GM10248 (cell line): ENCODE measurements at regions of chr14 and their contacts with region 1.

Region 1: GRCh38 chr14:49633640-49634546 is 1.2 kb downstream of the DNAAF2 start:
- DNase-seq: peak; percentile 93
- CTCF ChIP-seq: peak; percentile 94

Region 2: GRCh38 chr14:49620182-49621113 is 13.4 kb before region 1 on chr14 and contains the starts of genes MGAT2 and RPL36AL:
- CTCF ChIA-PET with region 1: interaction called, 76 read pairs
- POLR2A ChIA-PET with region 1: interaction called, 16 read pairs
- DNase-seq: peak; percentile 97
- CTCF ChIP-seq: peak; percentile 17

Region 3: GRCh38 chr14:49659526-49660455 is 25.9 kb after region 1 on chr14:
- CTCF ChIA-PET with region 1: interaction called, 10 read pairs
- POLR2A ChIA-PET with region 1: no interaction called
- DNase-seq: no peak
- CTCF ChIP-seq: no peak

Region 4: DNA sequence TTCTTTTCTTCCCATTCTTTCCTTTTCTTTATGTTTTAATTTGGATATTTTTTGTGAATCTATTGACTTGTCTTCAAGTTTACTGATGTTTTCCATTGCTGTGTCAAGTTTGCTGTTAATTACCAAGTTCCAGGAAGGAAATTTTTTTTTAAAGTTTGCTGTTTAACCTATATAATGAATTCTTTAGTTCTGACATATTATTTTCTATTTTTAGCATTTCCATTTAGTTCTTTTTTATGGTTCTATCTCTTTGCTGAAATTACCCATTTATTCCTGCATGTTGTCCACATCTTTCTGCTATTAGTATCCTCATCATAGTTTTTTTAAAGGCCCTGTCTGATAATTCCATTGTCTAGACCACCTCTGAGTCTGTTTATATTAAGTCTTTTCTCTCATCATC is 86.9 kb after region 1 on chr14:
- CTCF ChIA-PET with region 1: no interaction called
- POLR2A ChIA-PET with region 1: no interaction called
- DNase-seq: no peak
- CTCF ChIP-seq: no peak

Region 5: GRCh38 chr14:49828640-49829039 is 194.7 kb after region 1 on chr14:
- CTCF ChIA-PET with region 1: interaction called, 27 read pairs
- POLR2A ChIA-PET with region 1: no interaction called
- DNase-seq: no peak
- CTCF ChIP-seq: no peak